Aorta (tissue), 5 donors: ENCODE measurements at regions of chr20 and their contacts with region 1.

Region 1: DNA sequence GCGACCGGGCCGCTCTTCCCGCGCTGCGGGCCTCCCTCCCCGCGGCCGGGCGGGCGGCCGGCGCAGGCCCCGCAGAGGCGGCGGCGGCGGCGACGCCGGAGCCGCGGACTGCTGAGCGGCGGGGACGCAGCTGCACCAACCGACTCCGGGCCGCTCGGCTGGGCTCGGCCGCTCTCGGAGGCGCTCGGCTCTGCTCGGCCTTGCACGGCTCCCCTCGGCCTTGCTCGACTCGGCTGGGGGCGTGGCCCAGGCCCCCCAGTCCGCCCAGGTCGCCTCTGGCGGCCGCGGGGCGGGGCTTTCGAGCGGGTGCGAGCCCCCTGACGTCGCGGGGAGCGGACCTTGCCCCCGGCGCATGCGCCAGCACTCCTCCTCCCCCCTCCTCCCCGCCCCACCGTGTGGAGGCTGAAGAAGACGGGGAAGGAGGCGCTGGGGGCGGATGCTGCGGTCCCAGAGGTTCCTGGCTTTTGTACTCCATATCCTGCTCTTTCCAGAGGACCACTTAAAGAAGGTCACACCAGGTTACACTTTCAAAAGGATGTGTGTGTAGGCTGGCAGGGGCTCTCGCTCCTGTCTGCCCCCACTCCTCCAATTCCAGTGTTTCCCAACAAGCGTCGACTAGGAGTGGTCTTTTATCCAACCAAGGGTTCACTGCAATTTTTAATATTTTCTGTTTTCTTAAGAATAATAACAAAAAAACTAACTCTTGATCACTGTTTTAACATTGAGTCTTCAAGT is at the start of gene ZHX3:
- DNase-seq: peak; percentile 98 to 99
- ATAC-seq: peak; percentile 98
- H3K4me3 ChIP-seq: peak within 1 kb of the TSS; percentile 83 to 96
- H3K27ac ChIP-seq: peak within 1 kb of the TSS; percentile 53 to 99
- H3K4me1 ChIP-seq: peaks cover 3% of the 10 kb centered on the region in 2 donors
- H3K27me3 ChIP-seq: no peaks in the 10 kb centered on the region
- total RNA-seq, gene ZHX3: 50.7 to 98.6 TPM

Region 2: GRCh38 chr20:41249406-41250281 is 68.1 kb before region 1 on chr20:
- intact Hi-C with region 1: loop called (anchors 2 to 5 kb)
- DNase-seq: peak; percentile 86 to 88
- ATAC-seq: peak; percentile 88
- H3K4me3 ChIP-seq: no peak overlapping the region
- H3K27ac ChIP-seq: peak overlapping the region; percentile 89 to 95
- H3K4me1 ChIP-seq: peaks cover 9 to 19% of the 10 kb centered on the region in 2 donors
- H3K27me3 ChIP-seq: no peaks in the 10 kb centered on the region